ENCODE measurements at regions of chr1 and their contacts with region 1.

Region 1: GRCh38 chr1:109307274-109308021 is 637 bp upstream of the MYBPHL start:
- DNase-seq: no peak
- H3K4me3 ChIP-seq: no peak overlapping the region
- H3K4me3 Mint-ChIP-seq: no peak overlapping the region
- H3K27ac ChIP-seq: no peak overlapping the region
- H3K27ac Mint-ChIP-seq: no peak overlapping the region
- H3K4me1 ChIP-seq: no peaks in the 10 kb centered on the region
- H3K4me1 Mint-ChIP-seq: no peaks in the 10 kb centered on the region
- H3K27me3 ChIP-seq: no peaks in the 10 kb centered on the region
- H3K27me3 Mint-ChIP-seq: peaks cover 11 to 17% of the 10 kb centered on the region in 2 donors

Region 2: DNA sequence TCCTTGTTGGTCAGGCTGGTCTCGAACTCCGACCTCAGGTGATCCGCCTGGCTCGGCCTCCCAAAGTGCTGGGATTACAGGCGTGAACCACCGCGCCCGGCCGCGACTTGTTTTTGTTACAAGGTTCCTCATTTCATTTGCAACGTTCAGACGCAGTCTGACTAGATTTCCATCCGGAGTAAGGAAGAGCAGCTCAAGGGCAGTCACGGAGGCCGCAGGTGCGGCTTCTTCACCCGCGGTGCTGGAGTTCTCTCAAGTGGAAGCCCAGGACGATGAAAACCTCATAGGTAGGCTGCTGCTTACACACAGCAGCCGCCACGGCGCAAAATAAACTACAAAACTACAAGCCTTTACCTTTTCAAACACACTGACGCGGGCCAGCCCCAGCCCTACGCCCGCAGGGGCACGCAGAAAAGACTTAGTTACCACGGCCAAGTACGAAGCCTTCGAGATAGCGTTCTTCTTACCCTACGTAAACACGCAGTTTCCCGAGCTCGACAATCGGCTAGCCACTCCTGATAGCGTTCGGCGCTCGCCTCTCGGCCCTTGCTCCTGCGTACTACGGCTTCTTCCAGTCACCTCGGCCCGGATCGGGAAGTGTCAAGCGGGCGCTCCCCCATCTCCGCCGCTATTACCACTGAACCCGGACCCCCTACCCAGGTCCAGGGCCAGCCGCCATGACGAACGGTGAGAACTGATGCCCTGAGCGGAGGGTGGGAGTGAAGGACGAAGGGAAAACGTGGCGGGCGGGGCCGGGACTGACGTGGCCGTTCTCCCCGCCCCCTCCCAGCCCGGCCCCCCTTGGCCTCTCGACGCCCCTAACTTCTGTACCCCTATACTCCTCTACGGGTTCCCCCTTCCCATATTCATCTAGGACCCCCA is 217.0 kb before region 1 on chr1 and contains the start of gene TMEM167B:
- CTCF ChIA-PET with region 1: no interaction called
- POLR2A ChIA-PET with region 1: no interaction called
- DNase-seq: peak; percentile 75 to 93 (median 83)
- H3K4me3 ChIP-seq: peak within 1 kb of the TSS; percentile 75
- H3K4me3 Mint-ChIP-seq: peak within 1 kb of the TSS; percentile 92 to 99 (median 95)
- H3K27ac ChIP-seq: peak within 1 kb of the TSS; percentile 92
- H3K27ac Mint-ChIP-seq: peak within 1 kb of the TSS; percentile 94 to 99 (median 96)
- H3K4me1 ChIP-seq: peaks cover 22% of the 10 kb centered on the region
- H3K4me1 Mint-ChIP-seq: peaks cover 32 to 50% (median 43%) of the 10 kb centered on the region in 3 donors
- H3K27me3 ChIP-seq: no peaks in the 10 kb centered on the region
- H3K27me3 Mint-ChIP-seq: peaks cover 0 to 3% of the 10 kb centered on the region in 2 donors
- total RNA-seq, gene TMEM167B: 30.3 to 36.6 TPM

Region 3: DNA sequence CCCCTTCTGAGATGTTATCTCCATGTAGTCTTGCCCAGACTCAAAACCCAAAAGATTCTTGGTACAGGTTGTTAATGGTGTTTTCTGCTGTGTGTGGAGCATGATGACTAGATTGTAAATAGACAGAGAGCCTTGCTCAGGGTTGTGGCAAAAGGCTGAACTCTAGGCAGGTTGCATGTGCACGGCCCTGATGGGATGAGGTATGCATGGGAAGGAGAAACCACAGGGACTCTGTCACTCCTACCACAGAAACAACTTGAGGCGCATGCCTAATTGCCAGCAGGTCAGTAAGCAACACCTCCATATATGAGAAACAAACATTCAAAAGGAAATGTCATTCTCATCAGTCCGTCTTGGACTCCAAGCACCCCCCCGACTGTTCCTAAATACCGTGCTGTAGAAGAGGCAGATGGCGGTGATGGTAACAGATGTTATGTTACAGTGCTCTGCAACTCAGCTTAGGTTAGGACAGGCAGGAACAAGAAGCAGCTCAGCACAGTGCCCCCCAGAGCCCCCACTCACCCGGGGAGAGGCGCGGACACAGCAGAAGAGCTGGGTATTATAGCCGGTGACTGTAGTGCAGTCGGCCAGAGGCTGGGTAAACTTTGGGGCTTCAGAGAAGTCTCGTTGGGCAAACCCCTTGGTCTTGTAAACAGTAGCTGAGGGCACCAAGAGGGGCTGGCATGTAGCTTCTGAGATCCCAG is 11.6 kb before region 1 on chr1:
- CTCF ChIA-PET with region 1: interaction called, 12 read pairs
- POLR2A ChIA-PET with region 1: no interaction called
- DNase-seq: no peak
- H3K4me3 ChIP-seq: no peak overlapping the region
- H3K4me3 Mint-ChIP-seq: no peak overlapping the region
- H3K27ac ChIP-seq: no peak overlapping the region
- H3K27ac Mint-ChIP-seq: no peak overlapping the region
- H3K4me1 ChIP-seq: no peaks in the 10 kb centered on the region
- H3K4me1 Mint-ChIP-seq: no peaks in the 10 kb centered on the region
- H3K27me3 ChIP-seq: no peaks in the 10 kb centered on the region
- H3K27me3 Mint-ChIP-seq: peaks cover 23 to 46% of the 10 kb centered on the region in 2 donors

Region 4: GRCh38 chr1:109327285-109327684 is 19.8 kb after region 1 on chr1:
- CTCF ChIA-PET with region 1: no interaction called
- POLR2A ChIA-PET with region 1: no interaction called
- DNase-seq: no peak
- H3K4me3 ChIP-seq: no peak overlapping the region
- H3K4me3 Mint-ChIP-seq: no peak overlapping the region
- H3K27ac ChIP-seq: no peak overlapping the region
- H3K27ac Mint-ChIP-seq: no peak overlapping the region
- H3K4me1 ChIP-seq: no peaks in the 10 kb centered on the region
- H3K4me1 Mint-ChIP-seq: no peaks in the 10 kb centered on the region
- H3K27me3 ChIP-seq: no peaks in the 10 kb centered on the region
- H3K27me3 Mint-ChIP-seq: peaks cover 4 to 5% of the 10 kb centered on the region in 2 donors

Region 5: DNA sequence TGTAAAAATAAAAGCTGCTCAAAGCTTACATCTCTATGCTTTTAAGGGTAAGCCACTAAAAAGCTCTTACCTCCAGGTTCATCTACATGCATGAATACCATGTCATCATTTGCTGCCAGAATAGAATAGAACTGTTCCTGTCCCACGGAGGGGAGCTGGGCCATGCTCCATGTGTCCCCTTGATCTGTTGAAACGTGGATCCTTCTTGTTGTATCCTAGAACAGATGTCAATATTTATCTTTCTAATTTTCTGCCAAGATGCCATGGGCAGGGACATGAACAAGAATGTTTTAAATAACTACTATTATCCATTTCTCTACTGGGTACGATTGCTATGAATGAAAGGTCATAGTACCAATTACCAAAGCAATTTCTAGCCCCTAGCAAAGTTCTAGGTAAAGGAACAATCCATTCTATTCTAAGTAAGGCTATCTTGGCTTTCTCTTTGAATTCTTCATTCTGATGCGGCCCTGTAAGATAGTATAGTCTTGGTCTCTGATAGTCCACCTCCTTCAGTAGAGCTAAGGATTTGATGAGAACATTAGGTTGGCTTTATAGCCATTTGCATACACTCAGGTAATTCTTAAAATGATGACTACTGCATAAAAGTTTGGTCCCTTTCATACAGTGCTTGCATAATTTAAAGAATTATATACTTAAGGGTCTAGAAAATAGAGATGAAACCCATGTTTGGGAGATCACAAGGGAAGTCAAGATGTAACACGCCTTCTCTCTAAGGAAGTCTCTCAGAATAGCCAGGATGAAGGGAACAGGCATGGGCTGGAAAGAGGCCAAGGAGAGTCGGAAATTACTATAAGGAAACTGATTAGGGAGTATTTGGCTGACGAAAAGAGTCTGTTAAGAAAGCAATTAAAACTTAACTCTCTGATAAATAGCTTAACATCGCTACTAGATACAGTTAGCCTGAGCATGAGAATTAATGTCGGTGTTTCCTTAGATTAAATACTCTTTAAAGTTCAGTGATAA is 34.8 kb after region 1 on chr1:
- CTCF ChIA-PET with region 1: no interaction called
- POLR2A ChIA-PET with region 1: no interaction called
- DNase-seq: no peak
- H3K4me3 ChIP-seq: no peak overlapping the region
- H3K4me3 Mint-ChIP-seq: no peak overlapping the region
- H3K27ac ChIP-seq: no peak overlapping the region
- H3K27ac Mint-ChIP-seq: no peak overlapping the region
- H3K4me1 ChIP-seq: no peaks in the 10 kb centered on the region
- H3K4me1 Mint-ChIP-seq: no peaks in the 10 kb centered on the region
- H3K27me3 ChIP-seq: no peaks in the 10 kb centered on the region
- H3K27me3 Mint-ChIP-seq: peaks cover 3 to 8% of the 10 kb centered on the region in 2 donors

Region 6: DNA sequence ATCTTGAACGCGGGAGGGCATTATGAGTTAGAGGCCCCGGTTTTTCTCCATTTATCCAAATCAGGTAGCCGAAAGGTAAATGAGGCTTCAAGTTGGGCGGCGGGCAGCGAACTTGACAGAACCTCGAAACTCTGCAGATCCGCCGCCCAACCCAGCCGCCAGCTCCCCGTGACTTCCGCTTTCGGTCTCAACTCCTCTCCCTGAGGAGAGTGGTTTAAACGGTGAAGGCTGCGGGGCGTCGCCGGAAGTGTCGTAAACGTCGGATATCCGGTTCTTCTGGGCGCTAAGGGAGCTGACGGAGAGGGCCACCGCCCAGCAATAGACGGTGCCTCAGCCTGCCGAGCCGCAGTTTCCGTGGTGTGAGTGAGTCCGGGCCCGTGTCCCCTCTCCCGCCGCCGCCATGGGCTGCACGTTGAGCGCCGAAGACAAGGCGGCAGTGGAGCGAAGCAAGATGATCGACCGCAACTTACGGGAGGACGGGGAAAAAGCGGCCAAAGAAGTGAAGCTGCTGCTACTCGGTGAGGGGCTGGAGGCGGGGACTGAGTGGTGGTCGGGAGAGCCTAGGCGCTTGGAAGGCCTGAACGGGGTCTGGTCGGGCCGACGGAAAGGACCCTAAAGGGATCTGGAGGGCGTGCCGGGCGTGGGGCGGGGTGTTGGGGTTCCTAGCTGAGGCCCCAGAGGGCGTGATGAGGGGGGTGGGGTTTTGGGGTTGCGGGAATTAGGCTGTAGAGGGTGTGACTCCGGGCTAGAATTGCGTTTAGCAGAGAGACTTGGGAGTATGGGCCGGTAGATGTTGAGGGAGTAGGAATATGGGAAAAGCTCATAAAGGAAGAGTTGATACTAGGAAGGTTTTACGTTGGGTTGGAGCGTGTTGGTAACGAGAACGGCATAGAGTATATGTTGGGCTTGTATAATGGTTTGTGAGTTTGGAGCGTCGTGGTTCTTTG is 241.1 kb after region 1 on chr1 and contains the start of gene GNAI3:
- CTCF ChIA-PET with region 1: no interaction called
- POLR2A ChIA-PET with region 1: no interaction called
- DNase-seq: peak; percentile 93 to 98 (median 95)
- H3K4me3 ChIP-seq: peak within 1 kb of the TSS; percentile 97
- H3K4me3 Mint-ChIP-seq: peak within 1 kb of the TSS; percentile 88 to 100 (median 98)
- H3K27ac ChIP-seq: peak within 1 kb of the TSS; percentile 98
- H3K27ac Mint-ChIP-seq: peak within 1 kb of the TSS; percentile 95 to 100 (median 99)
- H3K4me1 ChIP-seq: peaks cover 37% of the 10 kb centered on the region
- H3K4me1 Mint-ChIP-seq: peaks cover 58 to 69% (median 65%) of the 10 kb centered on the region in 3 donors
- H3K27me3 ChIP-seq: no peaks in the 10 kb centered on the region
- H3K27me3 Mint-ChIP-seq: no peaks in the 10 kb centered on the region
- total RNA-seq, gene GNAI3: 9.8 to 9.9 TPM